ENCODE measurements at regions of chr10 and their contacts with region 1.

Region 1: DNA sequence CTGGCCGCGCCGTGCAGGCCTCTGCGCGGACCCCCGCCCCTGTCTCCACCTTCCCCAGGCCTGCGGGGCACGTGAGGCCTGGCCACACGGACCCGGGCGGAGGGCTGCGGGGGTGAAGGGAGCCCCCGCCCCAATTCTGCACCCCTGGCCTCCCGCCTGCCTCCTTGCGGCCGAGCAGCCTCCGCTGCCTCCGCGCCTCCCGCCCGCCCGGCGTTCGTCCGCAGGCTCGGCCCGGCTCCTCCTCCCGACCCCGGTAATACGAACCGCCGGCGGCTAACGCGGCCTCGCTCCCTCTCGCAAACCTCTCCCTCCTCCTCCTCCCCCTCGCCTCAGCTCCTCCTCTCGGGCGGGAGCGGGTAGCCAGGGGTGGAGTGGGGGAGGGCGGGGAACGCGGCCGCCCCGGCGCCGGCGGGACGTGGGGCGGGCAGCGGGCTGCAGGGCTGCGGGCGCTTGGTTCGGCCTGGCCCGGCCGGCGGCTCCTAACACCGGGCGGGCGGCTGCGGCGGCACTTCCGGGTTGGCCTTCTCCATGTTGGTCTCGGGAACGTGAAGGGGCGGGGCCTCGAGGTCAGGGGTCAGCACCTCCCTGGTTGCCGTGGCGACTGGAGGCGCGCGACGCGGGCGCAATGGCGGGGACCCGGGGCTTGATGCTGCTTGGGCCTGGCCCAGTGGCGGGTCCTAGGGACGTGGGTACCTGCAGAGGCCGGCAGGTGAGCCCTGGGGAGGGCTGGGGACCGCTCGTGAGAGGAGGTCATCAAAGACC is at the start of gene RAB11FIP2:
- DNase-seq: peak; percentile 82
- ATAC-seq: peak; percentile 95
- H3K4me3 ChIP-seq: peak within 1 kb of the TSS; percentile 52
- H3K27ac ChIP-seq: peak within 1 kb of the TSS; percentile 65
- H3K4me1 ChIP-seq: no peaks in the 10 kb centered on the region
- H3K27me3 ChIP-seq: no peaks in the 10 kb centered on the region
- CTCF ChIP-seq: peak; percentile 23; the same call in 1 of the 2 replicates
- POLR2A ChIP-seq: no peak
- RAD21 ChIP-seq: no peak
- total RNA-seq, gene RAB11FIP2: 13.1 and 16.1 TPM in 2 replicates

Region 2: GRCh38 chr10:117537436-117537903 is 509.1 kb before region 1 on chr10:
- CTCF ChIA-PET with region 1: no interaction called
- POLR2A ChIA-PET with region 1: no interaction called
- dilution Hi-C with region 1: no loop called
- in situ Hi-C with region 1: no loop called
- intact Hi-C with region 1: loop called (anchors 10 kb)
- DNase-seq: no peak
- ATAC-seq: peak; percentile 74
- H3K4me3 ChIP-seq: no peak overlapping the region
- H3K27ac ChIP-seq: no peak overlapping the region
- H3K4me1 ChIP-seq: no peaks in the 10 kb centered on the region
- H3K27me3 ChIP-seq: peaks cover 92% of the 10 kb centered on the region
- CTCF ChIP-seq: peak; percentile 67
- POLR2A ChIP-seq: no peak
- RAD21 ChIP-seq: peak; percentile 70

Region 3: GRCh38 chr10:118151461-118151860 is 104.9 kb after region 1 on chr10:
- CTCF ChIA-PET with region 1: no interaction called
- POLR2A ChIA-PET with region 1: no interaction called
- dilution Hi-C with region 1: no loop called
- in situ Hi-C with region 1: no loop called
- intact Hi-C with region 1: no loop called
- DNase-seq: no peak
- ATAC-seq: no peak
- H3K4me3 ChIP-seq: no peak overlapping the region
- H3K27ac ChIP-seq: no peak overlapping the region
- H3K4me1 ChIP-seq: no peaks in the 10 kb centered on the region
- H3K27me3 ChIP-seq: no peaks in the 10 kb centered on the region
- CTCF ChIP-seq: no peak
- POLR2A ChIP-seq: no peak
- RAD21 ChIP-seq: no peak

Region 4: GRCh38 chr10:118341791-118342637 is 295.4 kb after region 1 on chr10 and contains the start of gene FAM204A:
- CTCF ChIA-PET with region 1: no interaction called
- POLR2A ChIA-PET with region 1: no interaction called
- dilution Hi-C with region 1: no loop called
- in situ Hi-C with region 1: no loop called
- intact Hi-C with region 1: loop called (anchors 1 kb)
- DNase-seq: peak; percentile 90
- ATAC-seq: peak; percentile 99
- H3K4me3 ChIP-seq: peak within 1 kb of the TSS; percentile 90
- H3K27ac ChIP-seq: peak within 1 kb of the TSS; percentile 57
- H3K4me1 ChIP-seq: no peaks in the 10 kb centered on the region
- H3K27me3 ChIP-seq: no peaks in the 10 kb centered on the region
- CTCF ChIP-seq: no peak
- POLR2A ChIP-seq: peak; percentile 56
- RAD21 ChIP-seq: no peak
- total RNA-seq, gene FAM204A: 50.5 and 54.3 TPM in 2 replicates

Region 5: DNA sequence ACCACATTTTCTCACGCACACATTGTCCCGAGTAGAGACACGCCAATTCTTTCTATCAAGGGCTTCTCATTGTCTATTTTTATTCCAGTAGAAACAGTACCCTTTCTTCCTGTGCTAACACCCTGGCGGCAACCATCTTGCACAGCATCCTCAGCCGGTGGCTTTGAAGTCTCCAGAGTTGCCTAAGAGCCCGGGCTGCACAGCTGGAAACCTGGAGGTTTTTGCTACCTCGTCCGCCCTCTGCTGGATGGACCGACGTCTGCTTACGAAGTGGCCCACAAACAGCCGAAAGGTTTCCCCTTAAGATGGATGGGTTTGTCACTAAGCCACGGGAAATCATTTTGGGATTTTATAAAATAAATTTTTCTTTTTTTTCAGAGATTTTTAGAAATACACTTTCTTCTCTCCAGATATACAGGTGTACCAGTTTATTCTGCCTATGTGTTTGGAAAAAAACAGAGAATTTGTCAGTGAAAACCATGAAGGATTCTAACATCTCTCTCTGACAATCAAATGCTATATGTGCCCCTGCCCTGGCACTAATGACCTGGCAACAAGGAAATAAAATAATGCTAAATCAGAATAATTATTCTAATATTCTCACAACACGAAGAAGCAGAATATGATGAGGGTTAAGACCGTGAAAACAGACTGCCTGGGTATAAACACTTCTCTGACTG is 377.4 kb after region 1 on chr10:
- CTCF ChIA-PET with region 1: no interaction called
- POLR2A ChIA-PET with region 1: no interaction called
- dilution Hi-C with region 1: no loop called
- in situ Hi-C with region 1: no loop called
- intact Hi-C with region 1: loop called (anchors 5 kb)
- DNase-seq: peak; percentile 81
- ATAC-seq: peak; percentile 96
- H3K4me3 ChIP-seq: no peak overlapping the region
- H3K27ac ChIP-seq: no peak overlapping the region
- H3K4me1 ChIP-seq: no peaks in the 10 kb centered on the region
- H3K27me3 ChIP-seq: no peaks in the 10 kb centered on the region
- CTCF ChIP-seq: peak; percentile 78
- POLR2A ChIP-seq: no peak
- RAD21 ChIP-seq: peak; percentile 68

Region 6: DNA sequence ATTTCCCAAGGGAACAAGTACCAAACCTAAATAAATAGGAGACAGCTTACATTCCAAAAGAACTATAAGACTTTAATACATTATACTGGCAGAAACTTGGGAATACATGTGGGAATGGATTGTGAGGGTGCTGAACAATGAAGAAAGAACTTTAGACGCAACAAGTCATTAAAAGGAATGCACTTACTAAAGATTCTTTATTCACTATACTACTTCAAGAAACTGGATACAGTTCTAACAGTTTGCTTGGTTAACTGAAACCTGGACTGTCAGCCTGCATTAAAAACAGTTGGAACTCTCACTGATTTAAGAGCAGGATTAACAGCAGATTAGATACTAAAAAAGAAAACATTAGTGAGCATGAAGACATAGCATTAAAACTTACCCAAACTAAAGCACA is 696.2 kb after region 1 on chr10:
- CTCF ChIA-PET with region 1: no interaction called
- POLR2A ChIA-PET with region 1: no interaction called
- dilution Hi-C with region 1: no loop called
- in situ Hi-C with region 1: no loop called
- intact Hi-C with region 1: loop called (anchors 10 kb)
- DNase-seq: peak; percentile 86
- ATAC-seq: peak; percentile 74
- H3K4me3 ChIP-seq: no peak overlapping the region
- H3K27ac ChIP-seq: no peak overlapping the region
- H3K4me1 ChIP-seq: peaks cover 10% of the 10 kb centered on the region
- H3K27me3 ChIP-seq: no peaks in the 10 kb centered on the region
- CTCF ChIP-seq: no peak
- POLR2A ChIP-seq: no peak
- RAD21 ChIP-seq: no peak